PC-3 (cell line): ENCODE measurements at regions of chr17 and their contacts with region 1.

Region 1: DNA sequence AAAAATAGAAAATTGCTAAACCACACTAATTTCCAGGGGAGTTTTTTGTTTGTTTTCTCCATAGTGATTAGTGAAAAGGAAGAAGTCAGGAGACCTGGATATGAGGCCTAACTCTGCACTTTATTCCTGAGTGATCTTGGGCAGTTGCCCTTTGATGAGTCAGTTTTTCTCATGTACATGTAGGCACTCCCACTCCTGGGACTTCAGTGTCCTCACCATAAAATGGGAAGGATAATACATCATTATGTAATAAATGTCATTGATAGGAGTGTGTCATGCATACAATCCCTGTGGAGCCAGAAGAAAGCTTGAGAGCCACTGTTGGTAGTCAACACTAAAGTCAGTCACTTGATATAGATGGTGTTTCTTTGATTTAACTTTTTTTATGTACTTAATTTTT is 32.5 kb downstream of the WIPF2 start:
- DNase-seq: peak; percentile 89
- ATAC-seq: peak; percentile 99
- H3K4me3 ChIP-seq: no peak overlapping the region
- H3K27ac ChIP-seq: peak overlapping the region; percentile 68
- H3K4me1 ChIP-seq: peaks cover 13% of the 10 kb centered on the region
- H3K27me3 ChIP-seq: no peaks in the 10 kb centered on the region
- CTCF ChIP-seq: no peak

Region 2: GRCh38 chr17:40121181-40122135 is 130.1 kb before region 1 on chr17 and contains the start of gene MSL1:
- CTCF ChIA-PET with region 1: no interaction called
- POLR2A ChIA-PET with region 1: interaction called, 12 read pairs
- intact Hi-C with region 1: no loop called
- DNase-seq: peak; percentile 61
- ATAC-seq: peak; percentile 61
- H3K4me3 ChIP-seq: peak within 1 kb of the TSS; percentile 99
- H3K27ac ChIP-seq: peak within 1 kb of the TSS; percentile 57
- H3K4me1 ChIP-seq: peaks cover 4% of the 10 kb centered on the region
- H3K27me3 ChIP-seq: no peaks in the 10 kb centered on the region
- CTCF ChIP-seq: no peak
- total RNA-seq, gene MSL1: 22.2 and 38.1 TPM in 2 replicates

Region 3: GRCh38 chr17:40287494-40288369 is 36.2 kb after region 1 on chr17 and contains the start of gene CDC6:
- CTCF ChIA-PET with region 1: no interaction called
- POLR2A ChIA-PET with region 1: no interaction called
- intact Hi-C with region 1: no loop called
- DNase-seq: peak; percentile 97
- ATAC-seq: peak; percentile 78
- H3K4me3 ChIP-seq: peak within 1 kb of the TSS; percentile 94
- H3K27ac ChIP-seq: peak within 1 kb of the TSS; percentile 57
- H3K4me1 ChIP-seq: peaks cover 35% of the 10 kb centered on the region
- H3K27me3 ChIP-seq: no peaks in the 10 kb centered on the region
- CTCF ChIP-seq: no peak
- total RNA-seq, gene CDC6: 48.9 and 58.3 TPM in 2 replicates